ENCODE measurements at regions of chr7 and their contacts with region 1.

Region 1: DNA sequence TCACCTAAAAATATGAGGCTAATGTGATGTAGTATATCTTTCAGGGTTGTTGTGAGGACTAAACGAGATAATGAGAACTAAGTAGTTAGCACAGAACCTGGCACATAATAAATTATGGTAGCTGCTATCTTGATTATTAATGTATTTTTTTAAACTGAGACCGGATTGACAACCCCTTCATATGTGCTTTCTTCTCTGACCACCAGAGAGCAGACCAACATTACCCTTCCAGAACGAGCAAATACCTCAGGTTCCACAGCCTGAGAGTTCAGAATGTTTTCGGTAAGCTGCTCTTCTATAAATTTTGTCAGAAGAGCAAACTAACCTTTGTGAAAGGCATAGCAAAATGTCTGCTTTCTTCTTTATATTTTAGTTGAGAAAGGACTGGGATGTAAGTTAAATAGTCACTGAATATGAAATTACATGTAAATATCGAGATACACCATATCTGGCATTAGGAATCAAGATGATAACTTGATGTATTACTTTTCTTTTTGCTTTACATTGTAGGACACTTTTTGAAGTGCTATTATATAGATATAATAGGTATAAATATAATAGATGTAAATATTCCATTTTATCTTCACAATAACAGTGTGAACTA is 13.6 kb upstream of the BPGM start:
- H3K4me3 ChIP-seq: no peak overlapping the region
- H3K27ac ChIP-seq: no peak overlapping the region
- H3K4me1 ChIP-seq: no peaks in the 10 kb centered on the region
- CTCF ChIP-seq: no peak

Region 2: DNA sequence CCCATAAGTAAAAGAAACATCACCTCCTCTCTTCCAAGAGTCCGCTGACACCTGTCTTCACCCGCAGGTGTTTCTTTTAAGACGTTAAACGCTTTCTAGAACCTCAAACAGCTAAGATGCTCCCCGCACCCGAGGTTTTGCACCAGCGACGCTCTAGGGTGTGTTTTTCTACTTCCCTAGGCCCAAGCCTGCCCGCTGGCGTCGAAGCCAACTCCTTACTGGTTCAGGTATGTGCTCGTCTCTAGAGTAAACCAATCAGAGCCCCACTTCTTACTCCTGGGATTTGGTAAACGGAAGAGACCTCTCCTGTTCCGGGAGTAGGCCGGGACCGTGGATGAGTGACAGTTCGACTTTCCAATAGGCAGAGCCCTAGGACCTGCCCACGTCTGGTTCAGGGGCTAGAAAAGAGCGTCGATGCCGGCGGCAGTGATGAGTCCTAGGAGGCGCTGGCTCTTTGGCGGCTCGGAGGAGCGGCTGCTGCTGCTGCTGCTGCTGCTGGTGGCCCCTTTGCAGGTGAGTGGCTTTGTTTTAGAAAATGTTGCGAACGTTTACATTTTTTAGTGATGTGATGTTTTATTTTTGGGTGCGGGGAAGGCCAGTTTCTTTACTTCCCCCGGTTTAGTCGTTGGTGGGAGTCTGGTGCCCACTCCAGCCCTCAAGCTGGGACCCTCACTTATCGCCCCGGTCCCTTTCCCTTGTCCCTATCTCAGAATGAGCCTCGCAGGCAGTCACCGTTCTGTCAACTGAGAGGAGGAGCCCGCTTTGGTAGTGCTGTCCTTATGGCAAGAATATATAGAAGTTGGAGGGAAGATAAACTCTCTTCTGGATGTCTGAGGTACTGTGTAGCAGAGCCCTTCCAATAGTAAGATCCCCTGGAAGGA is 13.6 kb after region 1 on chr7 and contains the start of gene BPGM:
- CTCF ChIA-PET with region 1: interaction called, 33 read pairs
- POLR2A ChIA-PET with region 1: interaction called, 3 read pairs
- H3K4me3 ChIP-seq: peak within 1 kb of the TSS; percentile 64
- H3K27ac ChIP-seq: no peak within 1 kb of the TSS; the same call in 1 of the 2 replicates
- H3K4me1 ChIP-seq: no peaks in the 10 kb centered on the region
- CTCF ChIP-seq: peak; percentile 75; the same call in 1 of the 2 replicates

Region 3: GRCh38 chr7:134690016-134690415 is 57.0 kb after region 1 on chr7:
- CTCF ChIA-PET with region 1: interaction called, 20 read pairs
- POLR2A ChIA-PET with region 1: no interaction called
- H3K4me3 ChIP-seq: no peak overlapping the region
- H3K27ac ChIP-seq: no peak overlapping the region
- H3K4me1 ChIP-seq: no peaks in the 10 kb centered on the region
- CTCF ChIP-seq: 0 out of 2 replicates have a peak, but pooled peaks have one; percentile 26

Region 4: GRCh38 chr7:134724606-134725005 is 91.6 kb after region 1 on chr7:
- CTCF ChIA-PET with region 1: interaction called, 11 read pairs
- POLR2A ChIA-PET with region 1: no interaction called
- H3K4me3 ChIP-seq: no peak overlapping the region
- H3K27ac ChIP-seq: no peak overlapping the region
- H3K4me1 ChIP-seq: no peaks in the 10 kb centered on the region
- CTCF ChIP-seq: peak; percentile 53

Region 5: DNA sequence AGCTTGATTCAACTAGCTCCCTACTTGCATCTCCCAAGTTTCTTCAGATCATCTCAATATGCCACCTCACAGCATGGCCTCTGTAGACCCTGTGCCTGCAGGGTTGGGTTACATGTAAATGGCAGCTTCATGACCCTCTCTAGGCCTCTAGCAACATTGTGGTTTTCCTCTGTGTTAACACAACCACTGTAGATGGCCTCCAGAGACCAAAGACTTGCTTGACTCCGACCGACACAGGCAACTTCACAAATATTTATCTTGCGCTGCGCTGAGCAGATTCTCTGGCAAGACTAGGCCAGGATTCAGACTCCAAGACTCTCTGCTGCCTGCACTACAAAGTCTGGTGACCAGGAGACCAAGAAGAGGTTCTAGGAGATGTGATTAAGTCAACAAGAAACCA is 801.0 kb after region 1 on chr7:
- CTCF ChIA-PET with region 1: no interaction called
- POLR2A ChIA-PET with region 1: no interaction called
- H3K4me3 ChIP-seq: no peak overlapping the region
- H3K27ac ChIP-seq: no peak overlapping the region
- H3K4me1 ChIP-seq: no peaks in the 10 kb centered on the region
- CTCF ChIP-seq: no peak

Measured in HEK293 (cell line).